ACHN (cell line): ENCODE measurements at regions of chr4 and their contacts with region 1.

Region 1: GRCh38 chr4:146342600-146343192 is 128.4 kb downstream of the REELD1 start:
- DNase-seq: peak; percentile 39

Region 2: GRCh38 chr4:146647615-146648460 is 305.1 kb after region 1 on chr4:
- in situ Hi-C with region 1: no loop called
- DNase-seq: no peak

Region 3: DNA sequence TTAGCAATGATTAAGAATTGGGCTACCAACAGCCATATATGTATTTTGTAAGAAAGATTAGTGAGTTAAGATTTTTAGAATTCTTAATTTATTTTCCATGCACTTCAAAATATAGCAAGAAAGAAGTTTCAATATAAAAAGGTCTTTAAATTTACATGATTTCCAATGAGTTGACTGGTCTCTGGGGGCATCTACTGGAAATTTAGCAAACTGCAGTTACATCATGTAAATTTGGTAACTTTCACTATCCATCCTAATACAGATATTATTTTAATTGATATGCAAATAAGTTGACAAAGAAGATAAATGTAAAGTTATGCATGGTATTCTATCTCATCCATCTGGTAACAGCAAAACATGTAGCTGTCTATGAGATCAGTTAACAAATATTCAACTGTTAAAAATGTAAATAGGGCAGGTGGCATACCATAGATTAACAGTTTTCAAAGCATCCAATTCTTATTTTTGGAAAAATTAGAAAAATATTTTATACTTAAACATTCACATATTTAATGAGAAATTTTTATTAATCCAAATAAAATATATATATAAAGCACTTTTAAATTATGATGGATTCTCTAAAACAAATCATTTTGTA is 573.9 kb after region 1 on chr4:
- in situ Hi-C with region 1: loop called (anchors 25 kb)
- DNase-seq: peak; percentile 54